Caco-2 (cell line): ENCODE measurements at regions of chr5 and their contacts with region 1.

Region 1: DNA sequence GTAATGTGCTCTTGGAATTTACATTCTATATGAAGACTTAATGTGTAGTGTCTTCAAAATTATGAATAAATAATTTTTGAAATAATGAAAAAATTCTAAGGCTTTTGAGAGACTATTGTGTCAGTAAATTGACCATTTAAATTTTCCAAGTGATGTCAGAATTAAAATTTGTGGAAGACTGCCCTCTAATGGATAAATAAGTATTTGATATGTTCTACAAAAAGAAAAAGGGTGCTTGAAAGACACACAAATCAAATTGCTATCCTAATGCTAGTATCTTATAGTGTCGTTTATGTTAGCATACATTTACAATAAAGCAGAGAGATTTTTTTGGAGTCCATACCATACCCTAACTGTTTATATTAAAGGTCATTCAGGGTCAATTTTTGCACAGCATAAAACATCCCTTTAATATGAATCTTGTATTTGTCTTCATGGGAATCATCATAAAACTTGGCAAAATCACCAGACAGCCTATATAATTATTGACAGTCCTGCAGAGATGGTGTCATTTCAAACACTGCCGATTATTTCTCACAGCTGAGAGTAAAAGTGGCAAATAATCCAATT is 120.8 kb upstream of the SLC27A6 start:
- DNase-seq: no peak
- H3K4me3 ChIP-seq: no peak overlapping the region
- H3K4me3 Mint-ChIP-seq: no peak overlapping the region
- H3K27ac Mint-ChIP-seq: no peak overlapping the region
- H3K4me1 ChIP-seq: no peaks in the 10 kb centered on the region
- H3K4me1 Mint-ChIP-seq: no peaks in the 10 kb centered on the region
- H3K27me3 ChIP-seq: no peaks in the 10 kb centered on the region
- H3K27me3 Mint-ChIP-seq: no peaks in the 10 kb centered on the region
- CTCF ChIP-seq: peak in 1 of 2 experiments; percentile 29

Region 2: GRCh38 chr5:127564002-127564769 is 1280.3 kb before region 1 on chr5:
- CTCF ChIA-PET with region 1: no interaction called
- POLR2A ChIA-PET with region 1: no interaction called
- intact Hi-C with region 1: loop called (anchors 5 kb)
- DNase-seq: peak; percentile 53 to 71
- H3K4me3 ChIP-seq: no peak overlapping the region
- H3K4me3 Mint-ChIP-seq: no peak overlapping the region
- H3K27ac Mint-ChIP-seq: no peak overlapping the region
- H3K4me1 ChIP-seq: no peaks in the 10 kb centered on the region
- H3K4me1 Mint-ChIP-seq: no peaks in the 10 kb centered on the region
- H3K27me3 ChIP-seq: no peaks in the 10 kb centered on the region
- H3K27me3 Mint-ChIP-seq: no peaks in the 10 kb centered on the region
- CTCF ChIP-seq: peak; percentile 60 to 80

Region 3: GRCh38 chr5:128426090-128426534 is 418.3 kb before region 1 on chr5:
- CTCF ChIA-PET with region 1: no interaction called
- POLR2A ChIA-PET with region 1: no interaction called
- intact Hi-C with region 1: loop called (anchors 10 kb)
- DNase-seq: no peak
- H3K4me3 ChIP-seq: no peak overlapping the region
- H3K4me3 Mint-ChIP-seq: no peak overlapping the region
- H3K27ac Mint-ChIP-seq: no peak overlapping the region
- H3K4me1 ChIP-seq: peaks cover 11% of the 10 kb centered on the region
- H3K4me1 Mint-ChIP-seq: peaks cover 16% of the 10 kb centered on the region
- H3K27me3 ChIP-seq: no peaks in the 10 kb centered on the region
- H3K27me3 Mint-ChIP-seq: no peaks in the 10 kb centered on the region
- CTCF ChIP-seq: no peak

Region 4: GRCh38 chr5:128498844-128499455 is 345.5 kb before region 1 on chr5:
- CTCF ChIA-PET with region 1: no interaction called
- POLR2A ChIA-PET with region 1: no interaction called
- intact Hi-C with region 1: loop called (anchors 2 kb)
- DNase-seq: peak in 1 of 2 experiments; percentile 35
- H3K4me3 ChIP-seq: no peak overlapping the region
- H3K4me3 Mint-ChIP-seq: no peak overlapping the region
- H3K27ac Mint-ChIP-seq: no peak overlapping the region
- H3K4me1 ChIP-seq: no peaks in the 10 kb centered on the region
- H3K4me1 Mint-ChIP-seq: no peaks in the 10 kb centered on the region
- H3K27me3 ChIP-seq: no peaks in the 10 kb centered on the region
- H3K27me3 Mint-ChIP-seq: no peaks in the 10 kb centered on the region
- CTCF ChIP-seq: peak; percentile 51 to 64

Region 5: GRCh38 chr5:128667152-128667551 is 177.3 kb before region 1 on chr5:
- CTCF ChIA-PET with region 1: no interaction called
- POLR2A ChIA-PET with region 1: no interaction called
- intact Hi-C with region 1: loop called (anchors 1 kb)
- DNase-seq: peak in 1 of 2 experiments; percentile 4
- H3K4me3 ChIP-seq: no peak overlapping the region
- H3K4me3 Mint-ChIP-seq: no peak overlapping the region
- H3K27ac Mint-ChIP-seq: no peak overlapping the region
- H3K4me1 ChIP-seq: no peaks in the 10 kb centered on the region
- H3K4me1 Mint-ChIP-seq: no peaks in the 10 kb centered on the region
- H3K27me3 ChIP-seq: no peaks in the 10 kb centered on the region
- H3K27me3 Mint-ChIP-seq: no peaks in the 10 kb centered on the region
- CTCF ChIP-seq: peak in 1 of 2 experiments; percentile 29

Region 6: GRCh38 chr5:128674825-128675446 is 169.5 kb before region 1 on chr5:
- CTCF ChIA-PET with region 1: no interaction called
- POLR2A ChIA-PET with region 1: no interaction called
- intact Hi-C with region 1: loop called (anchors 2 kb)
- DNase-seq: peak; percentile 53 to 66
- H3K4me3 ChIP-seq: no peak overlapping the region
- H3K4me3 Mint-ChIP-seq: no peak overlapping the region
- H3K27ac Mint-ChIP-seq: no peak overlapping the region
- H3K4me1 ChIP-seq: no peaks in the 10 kb centered on the region
- H3K4me1 Mint-ChIP-seq: no peaks in the 10 kb centered on the region
- H3K27me3 ChIP-seq: no peaks in the 10 kb centered on the region
- H3K27me3 Mint-ChIP-seq: no peaks in the 10 kb centered on the region
- CTCF ChIP-seq: peak; percentile 58 to 68

Region 7: GRCh38 chr5:129082225-129083136 is 238.0 kb after region 1 on chr5:
- CTCF ChIA-PET with region 1: no interaction called
- POLR2A ChIA-PET with region 1: no interaction called
- intact Hi-C with region 1: no loop called
- DNase-seq: no peak
- H3K4me3 ChIP-seq: no peak overlapping the region
- H3K4me3 Mint-ChIP-seq: no peak overlapping the region
- H3K27ac Mint-ChIP-seq: no peak overlapping the region
- H3K4me1 ChIP-seq: no peaks in the 10 kb centered on the region
- H3K4me1 Mint-ChIP-seq: no peaks in the 10 kb centered on the region
- H3K27me3 ChIP-seq: no peaks in the 10 kb centered on the region
- H3K27me3 Mint-ChIP-seq: peaks cover 20% of the 10 kb centered on the region
- CTCF ChIP-seq: no peak